ENCODE measurements at regions of chr20 and their contacts with region 1.

Region 1: GRCh38 chr20:58236612-58237330 is 8.3 kb upstream of the ANKRD60 start:
- DNase-seq: peak; percentile 74 to 83 (median 79)
- ATAC-seq: peak; percentile 95
- H3K4me3 ChIP-seq: peak overlapping the region; percentile 35
- H3K27ac ChIP-seq: no peak overlapping the region; the same call in 2 of the 3 replicates
- H3K4me1 ChIP-seq: peaks cover 2 to 7% of the 10 kb centered on the region in 2 experiments; a peak in 2 of 5 replicates
- H3K27me3 ChIP-seq: no peaks in the 10 kb centered on the region
- CTCF ChIP-seq: peak; percentile 84 to 91 (median 86)
- EP300 ChIP-seq: no peak
- POLR2A ChIP-seq: no peak
- RAD21 ChIP-seq: peak; percentile 82 to 91

Region 2: DNA sequence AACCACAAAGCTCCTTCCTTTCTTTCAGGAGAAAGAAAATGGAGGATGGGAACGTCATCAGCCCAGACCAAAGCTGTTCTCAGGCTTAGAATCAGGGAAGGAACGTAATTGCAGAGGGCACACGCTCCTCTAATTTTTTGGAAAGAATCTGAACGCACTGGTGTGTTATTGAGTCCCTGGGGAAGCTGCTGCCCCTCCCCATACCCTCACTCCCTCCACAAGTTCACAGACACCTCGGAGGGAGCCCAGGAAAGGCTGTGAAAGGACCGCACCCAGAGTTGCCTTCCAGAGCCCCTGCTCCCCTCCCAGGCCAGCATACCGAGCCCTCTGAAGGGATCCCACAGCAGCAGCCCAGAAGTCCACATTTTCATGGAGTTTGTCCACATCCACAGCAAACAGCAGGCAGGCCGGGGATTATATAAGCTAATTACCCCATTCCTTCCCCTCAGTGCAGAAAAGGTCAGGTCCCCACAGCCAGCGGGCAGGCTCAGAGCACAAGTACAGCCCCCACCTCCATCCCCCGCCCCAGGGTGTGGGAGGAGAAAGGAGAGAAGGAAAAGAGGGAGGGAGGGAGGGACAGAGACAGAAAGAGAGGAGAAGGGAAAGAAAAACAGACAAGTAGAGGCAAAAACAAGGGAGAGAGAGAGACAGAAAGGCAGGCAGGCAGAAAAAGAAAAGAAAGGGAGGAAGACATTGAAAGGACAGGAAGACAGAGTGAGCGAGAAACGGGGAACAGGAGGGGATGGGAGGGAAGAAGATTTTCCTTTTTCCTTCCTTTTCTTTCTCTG is 61.9 kb before region 1 on chr20:
- CTCF ChIA-PET with region 1: no interaction called
- POLR2A ChIA-PET with region 1: no interaction called
- in situ Hi-C with region 1: no loop called
- intact Hi-C with region 1: no loop called
- DNase-seq: no peak
- ATAC-seq: no peak
- H3K4me3 ChIP-seq: no peak overlapping the region
- H3K27ac ChIP-seq: no peak overlapping the region
- H3K4me1 ChIP-seq: peaks cover 0 to 12% of the 10 kb centered on the region in 2 experiments; a peak in 3 of 5 replicates
- H3K27me3 ChIP-seq: peaks cover 17 to 56% of the 10 kb centered on the region in 2 experiments
- CTCF ChIP-seq: no peak
- EP300 ChIP-seq: no peak
- POLR2A ChIP-seq: no peak
- RAD21 ChIP-seq: no peak

Region 3: DNA sequence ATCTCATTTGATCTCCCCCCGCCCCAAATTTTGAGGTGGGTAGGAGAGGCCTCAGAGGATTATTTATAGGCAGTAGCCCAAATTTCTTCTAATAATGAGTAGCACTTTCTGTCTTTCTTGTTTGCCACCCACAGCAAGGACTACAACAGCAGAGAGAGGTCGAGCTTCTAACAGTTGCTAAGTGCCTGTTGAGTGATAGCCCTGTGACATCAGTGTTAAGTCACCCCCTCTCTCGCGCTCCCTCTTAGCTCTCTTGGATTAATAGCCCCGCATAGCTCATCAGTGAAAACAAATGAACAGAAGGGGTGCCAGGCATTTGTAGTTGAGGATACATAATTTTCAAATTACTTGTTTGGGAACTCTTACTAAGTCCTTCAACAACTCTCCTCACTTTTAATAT is 11.8 kb before region 1 on chr20:
- CTCF ChIA-PET with region 1: no interaction called
- POLR2A ChIA-PET with region 1: no interaction called
- in situ Hi-C with region 1: no loop called
- intact Hi-C with region 1: no loop called
- DNase-seq: no peak
- ATAC-seq: 0 out of 3 replicates have a peak, but pooled peaks have one; percentile 42
- H3K4me3 ChIP-seq: no peak overlapping the region
- H3K27ac ChIP-seq: no peak overlapping the region
- H3K4me1 ChIP-seq: peaks cover 0 to 8% of the 10 kb centered on the region in 2 experiments; a peak in 2 of 5 replicates
- H3K27me3 ChIP-seq: peaks cover 72 to 82% of the 10 kb centered on the region in 2 experiments
- CTCF ChIP-seq: no peak
- EP300 ChIP-seq: no peak
- POLR2A ChIP-seq: no peak
- RAD21 ChIP-seq: no peak

Region 4: DNA sequence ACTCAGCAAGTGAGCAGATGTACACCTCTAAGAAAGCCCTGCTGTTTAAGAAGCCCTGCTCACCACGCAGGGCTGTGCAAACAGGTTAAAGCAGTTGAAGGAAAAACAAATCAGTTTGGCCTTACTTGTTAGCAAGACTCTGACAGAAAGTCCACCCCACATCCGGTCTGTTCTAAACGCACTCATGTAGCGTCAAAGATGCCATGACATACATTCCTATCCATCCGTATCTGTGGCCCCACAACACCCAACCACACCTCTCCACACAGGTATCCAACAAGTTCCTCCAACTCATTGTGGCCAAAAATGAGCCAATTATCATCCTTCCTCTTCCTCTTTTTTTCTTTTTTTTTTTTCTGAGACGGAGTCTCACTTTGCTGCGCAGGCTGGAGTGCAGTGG is 50.0 kb after region 1 on chr20:
- CTCF ChIA-PET with region 1: no interaction called
- POLR2A ChIA-PET with region 1: no interaction called
- in situ Hi-C with region 1: no loop called
- intact Hi-C with region 1: no loop called
- DNase-seq: no peak
- ATAC-seq: no peak
- H3K4me3 ChIP-seq: no peak overlapping the region
- H3K27ac ChIP-seq: no peak overlapping the region
- H3K4me1 ChIP-seq: no peaks in the 10 kb centered on the region
- H3K27me3 ChIP-seq: no peaks in the 10 kb centered on the region
- CTCF ChIP-seq: no peak
- EP300 ChIP-seq: no peak
- POLR2A ChIP-seq: no peak
- RAD21 ChIP-seq: no peak

Region 5: GRCh38 chr20:58309575-58310290 is 73.0 kb after region 1 on chr20 and contains the start of gene RAB22A:
- CTCF ChIA-PET with region 1: no interaction called
- POLR2A ChIA-PET with region 1: no interaction called
- in situ Hi-C with region 1: no loop called
- intact Hi-C with region 1: loop called (anchors 5 kb)
- DNase-seq: peak; percentile 86 to 94 (median 94)
- ATAC-seq: peak; percentile 91
- H3K4me3 ChIP-seq: peak within 1 kb of the TSS; percentile 99
- H3K27ac ChIP-seq: peak within 1 kb of the TSS; percentile 88
- H3K4me1 ChIP-seq: peaks cover 3 to 12% of the 10 kb centered on the region in 2 experiments; a peak in 2 of 5 replicates
- H3K27me3 ChIP-seq: no peaks in the 10 kb centered on the region
- CTCF ChIP-seq: peak in 1 of 3 experiments; percentile 1; a peak in 1 of 6 replicates
- EP300 ChIP-seq: no peak
- POLR2A ChIP-seq: 0 out of 2 replicates have a peak, but pooled peaks have one; percentile 42
- RAD21 ChIP-seq: no peak; a peak in 1 of 4 replicates
- polyA plus RNA-seq, gene RAB22A: 1.1 to 1.9 TPM

Region 6: GRCh38 chr20:58374906-58375791 is 138.4 kb after region 1 on chr20:
- CTCF ChIA-PET with region 1: no interaction called
- POLR2A ChIA-PET with region 1: no interaction called
- in situ Hi-C with region 1: no loop called
- intact Hi-C with region 1: loop called (anchors 5 kb)
- DNase-seq: no peak
- ATAC-seq: no peak
- H3K4me3 ChIP-seq: no peak overlapping the region
- H3K27ac ChIP-seq: peak overlapping the region; percentile 65; the same call in 2 of the 3 replicates
- H3K4me1 ChIP-seq: peaks cover 8 to 12% of the 10 kb centered on the region in 2 experiments
- H3K27me3 ChIP-seq: no peaks in the 10 kb centered on the region
- CTCF ChIP-seq: no peak
- EP300 ChIP-seq: no peak
- POLR2A ChIP-seq: no peak
- RAD21 ChIP-seq: no peak

Region 7: DNA sequence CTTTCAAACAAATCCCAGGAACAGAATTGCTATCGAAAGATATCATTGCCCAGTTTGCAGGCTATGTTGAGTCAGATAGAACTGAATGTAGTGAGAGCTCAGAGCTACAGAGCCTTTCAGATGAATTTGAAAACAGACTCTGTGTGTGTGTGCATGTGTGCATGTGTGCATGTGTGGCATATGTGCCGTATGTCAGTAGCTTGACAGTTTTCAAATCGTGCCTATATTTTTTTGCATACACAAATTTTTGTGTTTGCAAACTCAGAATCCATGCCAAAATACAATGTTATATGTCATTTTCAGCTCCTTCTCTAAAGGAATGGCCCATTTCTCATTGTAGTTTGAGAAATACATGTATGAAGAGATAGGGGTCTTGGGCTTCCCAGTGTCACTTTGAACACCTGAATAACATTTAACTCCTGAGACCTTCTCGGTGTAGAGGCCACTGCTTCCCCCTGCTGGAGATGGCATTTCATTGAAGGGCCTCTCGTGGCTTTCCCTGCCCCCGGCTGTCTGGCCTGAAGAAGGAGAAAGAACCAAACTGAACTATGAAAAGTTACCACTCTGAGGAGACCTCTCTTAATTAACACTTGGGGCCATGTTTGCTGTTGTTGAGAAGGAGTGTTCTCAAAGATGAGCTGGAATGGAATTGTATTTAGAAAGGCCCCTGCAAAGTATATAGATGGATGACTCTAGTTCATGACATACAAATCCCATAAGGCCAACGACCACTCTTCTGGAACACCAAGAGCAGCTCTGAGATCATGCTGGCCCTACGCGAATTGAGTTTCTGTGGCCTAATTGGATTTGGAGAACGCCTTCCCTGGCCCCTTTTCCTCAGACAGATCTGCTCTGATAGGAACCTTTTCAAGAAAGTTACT is 211.0 kb after region 1 on chr20:
- CTCF ChIA-PET with region 1: interaction called, 63 read pairs
- POLR2A ChIA-PET with region 1: no interaction called
- in situ Hi-C with region 1: no loop called
- intact Hi-C with region 1: loop called (anchors 1 kb)
- DNase-seq: peak; percentile 57 to 72 (median 62)
- ATAC-seq: peak; percentile 96
- H3K4me3 ChIP-seq: no peak overlapping the region
- H3K27ac ChIP-seq: no peak overlapping the region
- H3K4me1 ChIP-seq: no peaks in the 10 kb centered on the region
- H3K27me3 ChIP-seq: no peaks in the 10 kb centered on the region
- CTCF ChIP-seq: peak; percentile 77 to 81 (median 79)
- EP300 ChIP-seq: no peak
- POLR2A ChIP-seq: no peak
- RAD21 ChIP-seq: peak; percentile 64 to 88

Region 8: DNA sequence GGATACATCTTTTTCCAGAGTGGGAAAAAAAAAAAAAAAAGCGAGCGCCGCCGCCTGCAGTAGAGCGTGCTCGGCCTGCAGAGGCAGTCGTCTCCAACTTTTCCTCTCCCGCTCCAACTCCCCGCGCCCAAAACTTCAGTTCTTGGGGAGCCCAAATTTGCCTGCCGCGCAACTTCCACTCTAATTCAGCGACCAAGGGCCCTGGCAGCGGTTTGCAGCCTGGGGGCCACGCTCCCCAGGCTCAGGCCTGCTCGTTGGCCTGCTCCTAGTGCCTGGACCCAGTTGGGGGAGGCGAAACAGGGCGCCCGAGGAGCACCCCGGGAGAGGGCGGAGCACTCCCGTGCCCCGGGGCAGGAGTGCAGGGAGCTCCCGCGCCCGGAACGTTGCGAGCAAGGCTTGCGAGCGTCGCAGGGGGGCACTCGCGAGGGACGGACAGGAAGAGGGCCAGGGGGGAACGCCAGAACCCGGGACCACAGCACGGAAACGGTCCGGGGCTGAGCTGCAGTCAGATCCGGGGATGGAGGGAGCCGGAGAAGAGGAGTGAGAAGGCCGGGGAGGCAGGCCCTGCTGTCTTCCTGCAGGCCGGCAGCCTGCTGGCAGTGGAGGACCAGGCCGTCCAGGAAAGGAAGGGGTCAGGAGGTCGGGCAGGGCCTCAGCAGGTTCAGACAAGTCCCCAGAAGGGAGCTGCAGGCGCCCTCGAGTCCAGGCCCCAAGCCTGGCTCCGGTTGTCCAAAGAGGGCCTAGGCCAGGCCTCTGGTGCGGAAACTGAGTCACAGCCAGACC is 414.2 kb after region 1 on chr20 and contains the start of gene STX16:
- CTCF ChIA-PET with region 1: no interaction called
- POLR2A ChIA-PET with region 1: interaction called, 5 read pairs
- in situ Hi-C with region 1: loop called (anchors 25 kb)
- intact Hi-C with region 1: loop called (anchors 10 kb)
- DNase-seq: peak; percentile 92 to 96 (median 94)
- ATAC-seq: peak; percentile 91
- H3K4me3 ChIP-seq: peak within 1 kb of the TSS; percentile 81
- H3K27ac ChIP-seq: peak within 1 kb of the TSS; percentile 91
- H3K4me1 ChIP-seq: peaks cover 10 to 20% of the 10 kb centered on the region in 2 experiments; a peak in 4 of 5 replicates
- H3K27me3 ChIP-seq: no peaks in the 10 kb centered on the region
- CTCF ChIP-seq: peak; percentile 68 to 75 (median 73)
- EP300 ChIP-seq: peak; percentile 56
- POLR2A ChIP-seq: peak; percentile 89
- RAD21 ChIP-seq: peak; percentile 48 to 51
- polyA plus RNA-seq, gene STX16: 4.4 to 4.9 TPM

Region 9: DNA sequence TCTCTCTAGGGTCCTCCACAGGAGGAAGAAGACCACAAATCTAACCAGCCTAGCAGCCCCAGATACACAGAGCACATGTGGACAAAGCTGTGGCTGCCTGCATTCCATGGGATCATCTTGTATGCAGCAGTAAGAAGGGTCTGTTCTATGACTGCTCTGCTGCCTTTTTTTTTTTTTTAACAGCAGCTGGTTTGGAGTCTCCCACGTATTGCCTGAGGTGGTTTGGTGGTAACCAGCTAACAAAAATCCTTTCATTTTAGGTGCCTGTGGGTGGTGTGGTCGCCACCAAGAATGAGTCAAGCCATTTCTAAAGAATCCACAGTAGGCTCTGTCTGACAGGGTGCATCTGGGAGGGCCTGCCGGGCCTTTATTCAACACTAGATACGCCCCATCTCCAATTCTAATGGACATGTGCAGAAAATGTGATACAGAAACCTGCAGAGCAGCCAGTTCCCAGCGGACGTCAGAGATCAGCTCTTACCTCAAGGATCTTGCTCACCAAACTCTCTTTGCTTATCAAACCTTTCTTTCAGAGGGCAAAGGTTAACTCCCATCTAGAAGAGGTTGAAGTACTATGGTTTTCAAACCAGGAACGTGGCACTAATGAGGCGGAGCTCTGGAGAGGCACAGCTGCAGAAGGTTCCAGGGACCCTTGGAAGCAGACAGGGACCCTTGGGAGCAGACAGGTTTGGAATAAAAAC is 582.0 kb after region 1 on chr20:
- CTCF ChIA-PET with region 1: no interaction called
- POLR2A ChIA-PET with region 1: no interaction called
- in situ Hi-C with region 1: loop called (anchors 25 kb)
- intact Hi-C with region 1: no loop called
- DNase-seq: no peak
- ATAC-seq: no peak
- H3K4me3 ChIP-seq: no peak overlapping the region
- H3K27ac ChIP-seq: no peak overlapping the region
- H3K4me1 ChIP-seq: no peaks in the 10 kb centered on the region
- H3K27me3 ChIP-seq: peaks cover 3 to 78% of the 10 kb centered on the region in 2 experiments
- CTCF ChIP-seq: no peak
- EP300 ChIP-seq: no peak
- POLR2A ChIP-seq: no peak
- RAD21 ChIP-seq: no peak

Region 10: GRCh38 chr20:58839474-58839874 is 602.7 kb after region 1 on chr20:
- CTCF ChIA-PET with region 1: interaction called, 3 read pairs
- POLR2A ChIA-PET with region 1: no interaction called
- in situ Hi-C with region 1: no loop called
- intact Hi-C with region 1: loop called (anchors 10 kb)
- DNase-seq: peak; percentile 50 to 61 (median 58)
- ATAC-seq: peak; percentile 91
- H3K4me3 ChIP-seq: no peak overlapping the region
- H3K27ac ChIP-seq: no peak overlapping the region
- H3K4me1 ChIP-seq: peaks cover 0 to 12% of the 10 kb centered on the region in 2 experiments; a peak in 1 of 5 replicates
- H3K27me3 ChIP-seq: peaks cover 18 to 44% of the 10 kb centered on the region in 2 experiments; a peak in 4 of 5 replicates
- CTCF ChIP-seq: peak; percentile 55 to 65 (median 59)
- EP300 ChIP-seq: no peak
- POLR2A ChIP-seq: no peak
- RAD21 ChIP-seq: peak; percentile 28 to 65

Measured in K562 (cell line).